ENCODE measurements at regions of chr1 and their contacts with region 1.

Region 1: DNA sequence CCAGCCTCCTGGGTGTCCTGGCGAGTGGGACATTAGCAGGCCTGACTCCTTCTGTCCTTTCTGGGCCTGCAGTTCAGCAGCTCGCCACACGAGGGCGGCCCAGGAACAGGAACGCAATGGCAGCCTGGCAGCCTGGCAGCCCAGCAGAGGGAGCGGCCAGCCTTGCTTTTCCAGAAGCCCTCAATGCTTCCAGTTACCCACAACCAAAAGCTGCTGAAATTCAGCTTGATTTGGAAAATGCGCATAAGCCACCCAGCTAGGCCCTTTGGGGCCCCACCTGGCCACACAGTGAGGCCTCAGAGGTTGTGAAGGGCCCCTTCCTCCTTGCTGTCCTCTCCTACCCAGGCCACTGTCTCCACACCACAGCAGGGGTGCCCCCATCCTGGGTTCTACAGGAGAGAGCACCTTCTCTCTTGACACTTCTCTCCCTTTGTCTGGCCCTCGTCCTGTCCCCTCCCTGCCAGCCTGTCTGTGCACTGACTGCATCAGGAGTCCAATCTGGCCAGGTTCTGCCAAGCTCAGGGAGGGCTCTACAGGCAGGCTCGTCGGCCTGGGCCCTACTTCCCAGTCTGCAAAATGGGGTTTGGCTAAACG is 103.4 kb upstream of the VAMP3 start:
- H3K4me3 Mint-ChIP-seq: no peak overlapping the region
- H3K27ac Mint-ChIP-seq: no peak overlapping the region
- H3K4me1 Mint-ChIP-seq: peaks cover 6% of the 10 kb centered on the region
- H3K27me3 Mint-ChIP-seq: peaks cover 8% of the 10 kb centered on the region

Region 2: DNA sequence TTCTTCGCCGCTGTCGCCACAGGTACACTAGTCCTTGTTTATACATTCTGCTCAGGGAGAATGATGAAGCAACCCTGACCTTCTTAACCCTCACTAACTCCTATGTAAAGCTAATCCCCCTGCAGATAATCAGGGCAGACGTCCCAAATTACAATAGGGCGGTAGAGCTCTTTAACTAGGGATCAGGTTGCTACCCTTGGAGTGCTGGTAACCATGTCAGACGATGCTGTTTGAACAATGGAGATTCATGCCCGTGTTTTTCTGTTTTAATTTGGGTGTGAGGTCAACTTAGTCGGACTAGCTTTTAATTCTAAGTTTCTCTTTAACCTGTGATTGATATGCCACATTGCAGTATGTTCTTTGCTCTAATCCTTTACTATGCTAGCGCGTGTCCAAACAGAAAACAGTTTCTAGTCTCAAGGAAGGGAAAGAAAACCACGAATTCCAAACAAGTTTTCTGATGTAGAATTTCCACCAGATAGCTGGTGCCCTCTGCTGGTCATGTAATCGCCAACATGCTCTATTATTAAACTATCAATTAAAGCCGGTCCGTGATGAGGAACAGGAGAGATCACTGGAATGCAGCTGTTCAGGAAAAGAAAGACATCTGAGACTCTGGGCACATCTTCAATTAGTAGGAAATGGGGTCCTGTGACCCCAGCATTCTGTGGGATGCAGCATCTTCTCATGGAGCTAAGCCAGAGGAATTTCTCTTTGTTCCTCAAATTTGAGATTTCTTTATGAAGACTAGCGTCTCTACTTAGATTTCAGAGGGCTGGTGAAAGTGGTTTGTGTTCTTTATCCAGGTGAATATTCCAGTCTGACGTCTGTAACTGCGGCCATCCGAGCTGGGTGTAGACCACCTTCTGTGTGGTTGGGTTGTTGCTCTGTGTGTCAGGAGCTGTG is 85.0 kb after region 1 on chr1:
- intact Hi-C with region 1: loop called (anchors 1 kb)
- H3K4me3 Mint-ChIP-seq: peak overlapping the region; percentile 46
- H3K27ac Mint-ChIP-seq: no peak overlapping the region
- H3K4me1 Mint-ChIP-seq: peaks cover 15% of the 10 kb centered on the region
- H3K27me3 Mint-ChIP-seq: no peaks in the 10 kb centered on the region

Region 3: GRCh38 chr1:7902478-7903085 is 234.9 kb after region 1 on chr1:
- intact Hi-C with region 1: loop called (anchors 5 kb)
- H3K4me3 Mint-ChIP-seq: peak overlapping the region; percentile 34
- H3K27ac Mint-ChIP-seq: peak overlapping the region; percentile 52
- H3K4me1 Mint-ChIP-seq: peaks cover 12% of the 10 kb centered on the region
- H3K27me3 Mint-ChIP-seq: peaks cover 3% of the 10 kb centered on the region